HAP-1 (cell line): ENCODE measurements at regions of chr2 and their contacts with region 1.

Region 1: GRCh38 chr2:65545837-65546805 is 113.7 kb upstream of the SPRED2 start:
- DNase-seq: no peak
- H3K4me3 ChIP-seq: no peak overlapping the region
- H3K4me1 ChIP-seq: no peaks in the 10 kb centered on the region
- H3K27me3 ChIP-seq: no peaks in the 10 kb centered on the region

Region 2: DNA sequence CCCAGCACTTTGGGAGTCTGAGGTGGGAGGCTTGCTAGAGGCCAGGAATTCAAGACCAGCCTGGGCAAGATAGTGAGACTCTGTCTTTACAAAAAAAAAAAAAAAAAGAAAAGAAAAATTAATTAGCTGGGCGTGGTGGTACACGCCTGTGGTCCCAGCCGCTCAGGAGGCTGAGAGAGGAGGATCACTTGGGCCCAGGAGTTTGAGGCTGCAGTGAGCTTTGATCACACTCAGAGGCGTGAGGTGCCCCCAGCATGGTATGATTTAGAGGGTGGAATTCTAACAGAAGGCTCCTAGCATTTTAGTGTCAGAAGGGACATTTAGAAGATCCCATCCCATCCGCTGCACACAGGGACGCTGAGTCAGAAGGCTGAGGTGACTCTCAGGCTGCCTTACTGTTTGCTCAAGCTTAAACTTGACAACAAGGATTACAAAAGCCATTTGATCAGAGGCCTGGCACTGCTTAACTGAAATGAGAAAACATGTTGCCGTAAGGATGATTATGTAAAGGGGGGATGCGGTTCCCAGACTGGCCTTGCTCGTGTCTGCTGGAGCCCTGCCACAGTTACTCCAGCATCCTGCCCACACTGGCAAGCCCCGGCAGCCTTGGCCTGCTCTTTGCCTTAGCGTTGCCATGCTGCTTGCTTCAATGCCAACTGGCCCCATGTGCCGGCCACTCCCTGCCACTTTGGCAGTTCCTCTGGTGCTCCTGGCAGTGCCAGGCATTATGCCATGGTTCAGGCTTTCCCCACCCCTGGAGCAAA is 602.6 kb before region 1 on chr2:
- in situ Hi-C with region 1: no loop called
- DNase-seq: no peak
- H3K4me3 ChIP-seq: no peak overlapping the region
- H3K4me1 ChIP-seq: no peaks in the 10 kb centered on the region; the same call in 1 of the 2 replicates
- H3K27me3 ChIP-seq: no peaks in the 10 kb centered on the region

Region 3: DNA sequence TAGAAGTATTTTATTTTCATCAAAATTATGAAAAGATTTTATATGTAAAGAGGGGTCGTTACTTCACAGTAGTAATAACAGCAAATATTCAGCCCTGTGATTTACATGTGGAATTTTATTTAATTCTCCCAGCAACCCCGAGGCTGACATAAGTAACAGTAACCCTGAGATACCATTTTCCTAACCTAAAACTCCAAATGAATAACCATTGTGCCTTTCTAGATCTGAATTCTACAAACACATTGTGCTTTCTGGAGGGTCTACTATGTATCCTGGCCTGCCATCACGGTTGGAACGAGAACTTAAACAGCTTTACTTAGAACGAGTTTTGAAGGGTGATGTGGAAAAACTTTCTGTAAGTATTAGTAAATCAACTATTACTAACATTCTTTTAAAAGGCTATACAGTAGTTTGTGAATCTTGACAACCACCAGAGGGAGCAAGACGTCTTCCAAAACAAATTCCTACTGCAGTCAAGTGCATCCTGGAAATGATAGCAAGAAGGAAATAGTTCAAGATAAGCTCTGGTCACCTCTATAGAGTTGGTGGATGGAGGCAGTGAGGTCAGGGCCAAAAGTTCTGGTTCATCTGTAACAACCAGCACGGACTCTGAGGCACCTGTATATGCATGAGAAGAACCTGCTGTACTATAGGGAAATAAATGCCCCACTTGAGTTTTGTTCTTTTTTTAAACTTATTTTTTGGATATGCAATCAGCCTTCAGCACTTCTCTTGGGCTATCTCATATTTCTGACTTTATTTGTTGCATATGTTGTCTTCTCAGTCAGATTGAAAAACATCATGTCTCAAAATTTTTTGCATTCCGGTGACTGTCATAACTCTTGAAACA is 281.1 kb before region 1 on chr2:
- in situ Hi-C with region 1: loop called (anchors 5 kb)
- DNase-seq: peak; percentile 55 to 60
- H3K4me3 ChIP-seq: no peak overlapping the region
- H3K4me1 ChIP-seq: no peaks in the 10 kb centered on the region
- H3K27me3 ChIP-seq: no peaks in the 10 kb centered on the region

Region 4: GRCh38 chr2:65443509-65444201 is 102.5 kb before region 1 on chr2:
- in situ Hi-C with region 1: loop called (anchors 10 kb)
- DNase-seq: no peak
- H3K4me3 ChIP-seq: no peak overlapping the region
- H3K4me1 ChIP-seq: peaks cover under 1% of the 10 kb centered on the region
- H3K27me3 ChIP-seq: no peaks in the 10 kb centered on the region